PC-3 (cell line): ENCODE measurements at regions of chr15 and their contacts with region 1.

Region 1: GRCh38 chr15:55917881-55918296 is 75.5 kb downstream of the NEDD4 start:
- DNase-seq: peak; percentile 89
- ATAC-seq: peak; percentile 98
- H3K4me3 ChIP-seq: no peak overlapping the region; the same call in 1 of the 2 replicates
- H3K27ac ChIP-seq: peak overlapping the region; percentile 70
- H3K4me1 ChIP-seq: peaks cover 36% of the 10 kb centered on the region
- H3K27me3 ChIP-seq: no peaks in the 10 kb centered on the region
- CTCF ChIP-seq: peak; percentile 71

Region 2: DNA sequence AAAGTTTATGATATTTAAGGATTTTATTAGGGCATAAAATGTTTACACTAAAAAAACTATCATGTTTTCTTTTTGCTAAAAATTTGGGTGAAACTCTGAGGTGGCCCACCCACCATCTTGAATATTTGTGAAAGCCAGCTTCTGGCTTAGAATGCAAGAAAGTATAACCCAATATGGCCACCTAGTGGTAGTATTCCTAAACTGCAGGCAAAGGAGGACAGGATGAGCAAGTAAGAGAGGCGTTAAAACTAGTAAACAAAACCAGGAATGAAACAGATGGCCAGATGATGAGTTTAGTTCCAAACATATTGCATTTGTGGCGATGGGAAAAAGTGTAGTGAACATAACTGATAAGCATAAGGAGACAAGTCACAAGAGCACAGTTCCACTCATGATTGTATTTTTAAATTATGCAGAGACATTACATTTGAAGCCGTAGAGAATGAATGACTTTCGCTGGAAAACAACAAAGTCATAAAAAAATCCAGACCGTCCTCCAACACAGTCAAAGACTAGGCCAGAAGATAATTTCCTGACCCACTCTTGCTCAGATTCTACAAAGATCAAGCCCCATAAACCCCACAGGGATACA is 71.7 kb before region 1 on chr15:
- CTCF ChIA-PET with region 1: interaction called, 6 read pairs
- POLR2A ChIA-PET with region 1: no interaction called
- intact Hi-C with region 1: loop called (anchors 5 kb)
- DNase-seq: peak; percentile 84
- ATAC-seq: peak; percentile 58; the same call in 1 of the 2 replicates
- H3K4me3 ChIP-seq: no peak overlapping the region
- H3K27ac ChIP-seq: no peak overlapping the region
- H3K4me1 ChIP-seq: no peaks in the 10 kb centered on the region
- H3K27me3 ChIP-seq: no peaks in the 10 kb centered on the region
- CTCF ChIP-seq: peak; percentile 83

Region 3: DNA sequence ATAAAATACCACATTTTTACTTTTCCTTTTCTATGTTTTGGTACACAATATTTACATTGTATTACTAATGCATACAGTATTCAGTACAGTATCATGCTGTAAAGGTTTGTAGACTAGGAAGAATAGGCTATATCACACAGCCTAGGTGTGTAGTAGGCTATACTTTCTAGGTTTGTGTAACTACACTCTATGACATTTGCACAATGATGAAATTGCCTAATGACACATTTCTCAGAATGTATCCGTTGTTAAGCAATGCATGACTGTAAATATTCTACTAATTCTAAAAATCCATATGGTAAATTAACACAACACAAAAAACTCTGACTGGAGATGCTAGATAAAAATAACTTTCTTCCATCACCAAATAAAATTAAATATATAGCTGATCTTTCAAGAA is 59.3 kb after region 1 on chr15:
- CTCF ChIA-PET with region 1: no interaction called
- POLR2A ChIA-PET with region 1: no interaction called
- intact Hi-C with region 1: no loop called
- DNase-seq: peak; percentile 16
- ATAC-seq: 0 out of 2 replicates have a peak, but pooled peaks have one; percentile 40
- H3K4me3 ChIP-seq: no peak overlapping the region
- H3K27ac ChIP-seq: no peak overlapping the region
- H3K4me1 ChIP-seq: no peaks in the 10 kb centered on the region
- H3K27me3 ChIP-seq: no peaks in the 10 kb centered on the region
- CTCF ChIP-seq: no peak

Region 4: GRCh38 chr15:55993111-55993803 is 75.4 kb after region 1 on chr15 and contains the start of gene NEDD4:
- CTCF ChIA-PET with region 1: no interaction called
- POLR2A ChIA-PET with region 1: no interaction called
- intact Hi-C with region 1: loop called (anchors 5 kb)
- DNase-seq: peak; percentile 81
- ATAC-seq: peak; percentile 91
- H3K4me3 ChIP-seq: peak within 1 kb of the TSS; percentile 72
- H3K27ac ChIP-seq: peak within 1 kb of the TSS; percentile 23; the same call in 1 of the 2 replicates
- H3K4me1 ChIP-seq: peaks cover 12% of the 10 kb centered on the region
- H3K27me3 ChIP-seq: no peaks in the 10 kb centered on the region
- CTCF ChIP-seq: peak; percentile 28
- total RNA-seq, gene NEDD4: 7.5 and 9.6 TPM in 2 replicates

Region 5: DNA sequence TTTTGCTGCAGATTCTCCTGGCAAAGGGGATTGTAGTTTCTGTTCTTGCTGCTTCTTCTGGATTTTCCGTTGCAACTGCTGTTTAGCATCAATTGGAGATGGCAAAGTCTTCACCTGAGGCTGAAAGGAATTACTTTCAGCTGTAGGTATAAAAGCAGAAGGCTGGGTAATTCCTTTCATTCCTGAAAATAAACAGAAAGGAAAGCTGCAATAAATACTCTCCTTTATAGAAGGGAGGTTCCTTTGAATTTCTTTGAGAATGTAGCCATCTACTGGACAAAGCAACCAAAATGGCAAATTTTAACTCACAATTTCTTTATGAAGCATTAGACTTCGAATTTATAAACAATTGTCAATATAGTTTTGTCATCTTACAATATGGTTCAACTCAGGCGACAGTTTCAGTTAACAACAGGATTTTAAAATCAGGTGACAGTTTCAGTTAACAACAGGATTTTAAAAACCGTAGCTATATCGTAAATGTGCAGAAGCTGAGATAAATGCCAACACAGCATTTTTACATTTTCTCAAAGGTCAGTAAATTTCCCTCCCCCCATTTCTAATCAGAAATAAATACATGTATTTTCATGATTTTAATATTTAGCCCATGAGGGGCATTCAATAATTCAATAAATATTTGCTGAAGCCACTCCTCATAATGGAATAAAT is 180.4 kb after region 1 on chr15:
- CTCF ChIA-PET with region 1: interaction called, 5 read pairs
- POLR2A ChIA-PET with region 1: no interaction called
- intact Hi-C with region 1: loop called (anchors 1 kb)
- DNase-seq: peak; percentile 32
- ATAC-seq: no peak
- H3K4me3 ChIP-seq: no peak overlapping the region
- H3K27ac ChIP-seq: no peak overlapping the region
- H3K4me1 ChIP-seq: no peaks in the 10 kb centered on the region
- H3K27me3 ChIP-seq: no peaks in the 10 kb centered on the region
- CTCF ChIP-seq: peak; percentile 52; the same call in 1 of the 2 replicates